Ovary (tissue), 10 donors: ENCODE measurements at regions of chr11 and their contacts with region 1.

Region 1: GRCh38 chr11:125164422-125165110 is at the start of gene PKNOX2:
- DNase-seq: peak; percentile 87 to 92 (median 91)
- H3K4me3 ChIP-seq: peak within 1 kb of the TSS; percentile 62
- H3K27ac ChIP-seq: peak within 1 kb of the TSS; percentile 88 to 91
- H3K4me1 ChIP-seq: peaks cover 10% of the 10 kb centered on the region
- H3K27me3 ChIP-seq: no peaks in the 10 kb centered on the region
- CTCF ChIP-seq: peak; percentile 40 to 78 (median 53)
- EP300 ChIP-seq: no peak
- POLR2A ChIP-seq: peak; percentile 48
- total RNA-seq, gene PKNOX2: 11.8 to 42.3 (median 30.2) TPM

Region 2: GRCh38 chr11:125053167-125053566 is 111.4 kb before region 1 on chr11:
- intact Hi-C with region 1: no loop called
- DNase-seq: no peak
- H3K4me3 ChIP-seq: no peak overlapping the region
- H3K27ac ChIP-seq: no peak overlapping the region
- H3K4me1 ChIP-seq: no peaks in the 10 kb centered on the region
- H3K27me3 ChIP-seq: no peaks in the 10 kb centered on the region
- CTCF ChIP-seq: no peak
- EP300 ChIP-seq: no peak
- POLR2A ChIP-seq: no peak

Region 3: GRCh38 chr11:125214571-125215565 is 50.3 kb after region 1 on chr11:
- intact Hi-C with region 1: loop called in 2 of 4 experiments (anchors 5 kb)
- DNase-seq: peak; percentile 65 to 79 (median 69)
- H3K4me3 ChIP-seq: no peak overlapping the region
- H3K27ac ChIP-seq: peak overlapping the region; percentile 41 to 83
- H3K4me1 ChIP-seq: peaks cover 22% of the 10 kb centered on the region
- H3K27me3 ChIP-seq: no peaks in the 10 kb centered on the region
- CTCF ChIP-seq: no peak
- EP300 ChIP-seq: no peak
- POLR2A ChIP-seq: no peak

Region 4: GRCh38 chr11:125224391-125225010 is 59.9 kb after region 1 on chr11:
- intact Hi-C with region 1: loop called in 1 of 4 experiments (anchors 5 kb)
- DNase-seq: peak; percentile 48 to 71 (median 58)
- H3K4me3 ChIP-seq: no peak overlapping the region
- H3K27ac ChIP-seq: peak overlapping the region; percentile 16 to 54
- H3K4me1 ChIP-seq: peaks cover 12% of the 10 kb centered on the region
- H3K27me3 ChIP-seq: no peaks in the 10 kb centered on the region
- CTCF ChIP-seq: peak in 2 of 3 donors; percentile 31 to 44
- EP300 ChIP-seq: no peak
- POLR2A ChIP-seq: no peak

Region 5: GRCh38 chr11:125345421-125346178 is 181.0 kb after region 1 on chr11:
- intact Hi-C with region 1: loop called (anchors 2 kb)
- DNase-seq: peak; percentile 84 to 93 (median 91)
- H3K4me3 ChIP-seq: no peak overlapping the region
- H3K27ac ChIP-seq: peak overlapping the region; percentile 44 to 68
- H3K4me1 ChIP-seq: peaks cover 15% of the 10 kb centered on the region
- H3K27me3 ChIP-seq: no peaks in the 10 kb centered on the region
- CTCF ChIP-seq: peak; percentile 84 to 94 (median 87)
- EP300 ChIP-seq: no peak
- POLR2A ChIP-seq: no peak

Region 6: GRCh38 chr11:125404776-125405435 is 240.3 kb after region 1 on chr11:
- intact Hi-C with region 1: loop called in 1 of 4 experiments (anchors 5 kb)
- DNase-seq: peak; percentile 67 to 87 (median 78)
- H3K4me3 ChIP-seq: no peak overlapping the region
- H3K27ac ChIP-seq: no peak overlapping the region
- H3K4me1 ChIP-seq: peaks cover 8% of the 10 kb centered on the region
- H3K27me3 ChIP-seq: no peaks in the 10 kb centered on the region
- CTCF ChIP-seq: peak; percentile 84 to 88 (median 87)
- EP300 ChIP-seq: no peak
- POLR2A ChIP-seq: no peak

Region 7: DNA sequence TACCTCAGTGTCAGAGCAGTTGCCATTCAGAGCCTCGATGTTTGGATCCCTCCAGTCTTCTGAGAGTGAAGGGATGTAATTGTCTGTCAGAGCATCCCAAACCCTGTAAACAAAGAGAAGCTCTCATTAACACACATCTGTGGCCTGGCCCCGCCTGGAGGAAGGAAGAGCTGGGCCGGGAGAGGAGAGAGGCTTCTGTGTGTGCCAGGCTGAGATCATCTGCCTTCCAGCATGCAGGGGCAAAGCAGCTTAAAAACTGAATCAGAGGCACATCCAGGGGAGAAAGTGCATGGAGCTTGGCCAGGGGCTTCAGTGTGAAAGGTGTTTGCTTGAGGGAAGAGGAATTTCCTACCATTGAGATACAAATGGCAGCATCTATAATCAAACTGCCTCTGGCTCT is 317.0 kb after region 1 on chr11:
- intact Hi-C with region 1: no loop called
- DNase-seq: no peak
- H3K4me3 ChIP-seq: no peak overlapping the region
- H3K27ac ChIP-seq: no peak overlapping the region
- H3K4me1 ChIP-seq: no peaks in the 10 kb centered on the region
- H3K27me3 ChIP-seq: no peaks in the 10 kb centered on the region
- CTCF ChIP-seq: no peak
- EP300 ChIP-seq: no peak
- POLR2A ChIP-seq: no peak